ENCODE measurements at regions of chr19 and their contacts with region 1.

Region 1: DNA sequence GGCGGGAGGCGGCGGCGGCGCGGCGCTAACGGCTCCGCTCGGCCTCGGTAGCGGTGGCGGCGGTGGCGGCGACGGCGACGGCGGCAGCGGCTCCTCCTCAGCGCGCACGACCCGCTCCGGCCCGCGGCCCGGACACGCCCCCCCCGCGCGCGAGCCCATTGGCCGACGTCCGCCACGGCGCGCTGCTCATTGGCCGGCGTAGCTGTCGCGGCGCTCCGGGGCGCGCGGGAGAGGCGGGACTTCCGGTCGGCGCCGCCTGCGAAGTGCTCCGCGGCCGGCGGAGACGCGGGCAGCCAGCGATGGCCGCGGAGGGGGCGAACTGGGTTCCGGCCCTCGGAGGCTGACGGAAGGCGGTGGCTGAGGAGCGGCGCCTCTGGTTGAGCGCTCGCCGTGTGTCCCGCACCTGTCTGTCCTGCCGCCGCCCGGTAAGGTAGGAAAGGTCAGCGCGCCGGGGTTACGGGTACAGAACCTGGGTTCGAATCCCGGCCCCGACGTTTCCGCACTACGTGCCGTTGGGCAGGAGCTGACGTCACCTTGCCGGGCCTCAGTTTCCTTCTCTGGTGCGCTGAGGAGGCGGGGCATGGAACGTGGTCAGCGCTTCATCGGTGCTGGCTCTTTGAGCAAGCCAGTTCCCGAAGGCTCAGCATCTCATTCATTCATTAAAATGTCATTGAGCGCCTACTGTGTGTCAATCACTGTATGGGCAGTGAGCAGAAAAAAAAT is at the start of gene ELAVL1:
- DNase-seq: peak; percentile 82 to 93
- H3K4me3 ChIP-seq: peak within 1 kb of the TSS; percentile 92 to 94
- H3K27ac ChIP-seq: peak within 1 kb of the TSS; percentile 84 to 92
- H3K4me1 ChIP-seq: peaks cover 0 to 45% (median 35%) of the 10 kb centered on the region in 4 donors
- H3K27me3 ChIP-seq: no peaks in the 10 kb centered on the region
- CTCF ChIP-seq: no peak

Region 2: GRCh38 chr19:7919610-7920518 is 85.8 kb before region 1 on chr19 and contains the start of gene SNAPC2:
- intact Hi-C with region 1: loop called (anchors 5 kb)
- DNase-seq: peak; percentile 94 to 98
- H3K4me3 ChIP-seq: peak within 1 kb of the TSS; percentile 72 to 85
- H3K27ac ChIP-seq: peak within 1 kb of the TSS; percentile 87 to 88
- H3K4me1 ChIP-seq: peaks cover 4 to 86% (median 75%) of the 10 kb centered on the region in 4 donors
- H3K27me3 ChIP-seq: peaks cover 0 to 44% of the 10 kb centered on the region in 2 donors
- CTCF ChIP-seq: no peak

Region 3: DNA sequence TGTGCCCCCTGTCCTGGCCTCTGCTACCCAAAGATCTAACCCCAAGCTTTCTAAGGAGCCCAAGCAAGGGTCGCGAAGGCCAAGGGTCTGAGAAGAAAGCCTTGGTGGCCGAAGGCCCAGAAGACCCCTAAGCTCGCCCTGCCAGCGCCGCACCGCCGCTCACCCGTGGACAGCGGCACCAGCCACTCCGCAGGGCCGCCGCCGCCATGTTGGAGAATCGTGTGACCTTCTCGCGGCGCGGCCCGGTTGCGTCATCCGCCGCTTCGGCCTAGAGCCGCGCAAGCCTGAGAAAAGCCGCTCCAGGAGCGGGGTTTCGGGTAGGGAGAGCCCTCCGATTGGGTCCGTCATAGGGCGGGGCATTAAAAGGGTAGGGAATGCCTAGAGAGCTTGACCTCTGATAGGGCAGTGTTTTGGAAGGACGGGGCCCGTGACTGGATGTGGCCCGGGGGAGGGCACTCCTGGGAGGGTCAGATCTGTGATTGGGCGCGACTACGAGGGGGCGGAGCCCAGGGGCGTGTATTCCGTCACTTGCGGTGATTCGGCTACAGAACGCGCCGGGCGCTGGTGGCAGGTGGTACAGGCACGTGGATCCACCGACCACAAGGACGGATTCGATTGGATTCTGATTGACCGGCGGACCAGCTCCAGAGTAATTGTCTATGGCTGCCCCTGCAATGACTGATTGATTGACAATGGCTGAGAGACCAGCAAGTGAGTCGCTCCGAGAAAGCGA is 62.1 kb before region 1 on chr19 and contains the start of gene TIMM44:
- intact Hi-C with region 1: loop called (anchors 10 kb)
- DNase-seq: peak; percentile 99 to 100
- H3K4me3 ChIP-seq: peak within 1 kb of the TSS; percentile 82 to 93
- H3K27ac ChIP-seq: peak within 1 kb of the TSS; percentile 99 to 100
- H3K4me1 ChIP-seq: peaks cover 0 to 29% (median 17%) of the 10 kb centered on the region in 4 donors
- H3K27me3 ChIP-seq: no peaks in the 10 kb centered on the region
- CTCF ChIP-seq: no peak

Region 4: DNA sequence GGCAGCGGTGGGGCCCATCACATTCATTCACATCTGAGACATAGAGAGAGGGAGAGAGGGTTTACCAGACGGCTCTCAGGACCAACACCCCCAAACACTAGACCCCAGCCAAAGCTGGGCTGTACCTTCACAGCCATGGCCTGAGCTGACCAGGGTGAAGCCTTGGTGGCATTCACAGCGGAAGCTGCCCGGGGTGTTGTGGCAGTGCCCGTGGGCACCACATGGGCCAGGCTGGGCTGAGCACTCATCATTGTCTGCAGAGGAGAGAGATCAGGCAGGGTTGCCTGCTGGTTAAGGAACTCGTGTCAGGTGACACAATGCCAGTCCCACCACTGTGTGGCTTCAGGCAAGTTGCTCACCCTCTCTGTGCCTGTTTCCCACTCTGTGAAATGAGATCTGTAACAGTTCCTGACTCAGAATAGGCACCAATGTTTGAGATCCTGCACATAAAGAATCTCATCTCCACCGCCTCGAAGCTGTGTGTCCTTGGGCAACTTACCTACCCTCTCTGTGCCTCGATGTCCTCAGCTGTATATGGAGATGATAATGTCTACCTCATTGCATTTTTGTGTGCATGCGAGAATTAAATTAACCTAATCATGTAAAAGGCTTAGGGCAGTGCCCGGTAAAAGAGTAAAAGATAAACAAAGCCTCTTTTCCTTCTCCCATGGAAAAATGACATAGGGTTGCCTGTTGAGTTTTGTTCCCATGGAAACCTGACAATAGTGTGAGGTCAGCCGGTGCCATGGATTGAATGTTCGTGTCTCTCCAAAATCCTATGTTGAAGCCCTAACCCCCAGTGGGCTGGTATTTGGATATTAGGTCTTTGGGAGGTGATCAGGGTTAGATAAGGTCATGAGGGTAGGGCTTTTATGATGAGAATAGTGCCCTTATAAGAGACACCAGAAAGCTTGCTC is 69.7 kb after region 1 on chr19:
- intact Hi-C with region 1: no loop called
- DNase-seq: no peak
- H3K4me3 ChIP-seq: no peak overlapping the region
- H3K27ac ChIP-seq: no peak overlapping the region
- H3K4me1 ChIP-seq: no peaks in the 10 kb centered on the region
- H3K27me3 ChIP-seq: peaks cover 0 to 6% of the 10 kb centered on the region in 2 donors
- CTCF ChIP-seq: no peak

Measured in tibial artery (tissue), 4 donors.